ENCODE measurements at regions of chr7 and their contacts with region 1.

Region 1: GRCh38 chr7:129952653-129953560 is at the start of gene UBE2H:
- DNase-seq: peak; percentile 70
- ATAC-seq: peak; percentile 56
- H3K4me3 ChIP-seq: peak within 1 kb of the TSS; percentile 86 to 94 (median 87)
- H3K27ac ChIP-seq: peak within 1 kb of the TSS; percentile 92
- H3K4me1 ChIP-seq: peaks cover 25% of the 10 kb centered on the region
- H3K27me3 ChIP-seq: no peaks in the 10 kb centered on the region; a peak in 1 of 5 replicates
- CTCF ChIP-seq: no peak
- EP300 ChIP-seq: 0 out of 4 replicates have a peak, but pooled peaks of 1 of the 2 experiments have one; percentile 45
- POLR2A ChIP-seq: peak; percentile 74 to 75
- RAD21 ChIP-seq: 0 out of 2 replicates have a peak, but pooled peaks have one; percentile 39
- total RNA-seq, gene UBE2H: 15.5 and 18.7 TPM in 2 replicates

Region 2: GRCh38 chr7:129707910-129708499 is 244.9 kb before region 1 on chr7:
- CTCF ChIA-PET with region 1: no interaction called
- POLR2A ChIA-PET with region 1: no interaction called
- in situ Hi-C with region 1: no loop called
- intact Hi-C with region 1: no loop called
- DNase-seq: no peak
- ATAC-seq: no peak
- H3K4me3 ChIP-seq: no peak overlapping the region
- H3K27ac ChIP-seq: no peak overlapping the region
- H3K4me1 ChIP-seq: peaks cover 2% of the 10 kb centered on the region
- H3K27me3 ChIP-seq: no peaks in the 10 kb centered on the region
- CTCF ChIP-seq: no peak
- EP300 ChIP-seq: no peak
- POLR2A ChIP-seq: no peak
- RAD21 ChIP-seq: no peak

Region 3: GRCh38 chr7:129990403-129991192 is 37.7 kb after region 1 on chr7:
- CTCF ChIA-PET with region 1: no interaction called
- POLR2A ChIA-PET with region 1: no interaction called
- in situ Hi-C with region 1: no loop called
- intact Hi-C with region 1: loop called (anchors 5 kb)
- DNase-seq: peak; percentile 51
- ATAC-seq: peak; percentile 89
- H3K4me3 ChIP-seq: peak overlapping the region in 2 of 3 experiments; percentile 9 to 46; a peak in 3 of 6 replicates
- H3K27ac ChIP-seq: peak overlapping the region; percentile 55
- H3K4me1 ChIP-seq: peaks cover 25% of the 10 kb centered on the region
- H3K27me3 ChIP-seq: no peaks in the 10 kb centered on the region
- CTCF ChIP-seq: no peak
- EP300 ChIP-seq: peak in 1 of 2 experiments; percentile 75; a peak in 2 of 4 replicates
- POLR2A ChIP-seq: no peak
- RAD21 ChIP-seq: no peak

Region 4: DNA sequence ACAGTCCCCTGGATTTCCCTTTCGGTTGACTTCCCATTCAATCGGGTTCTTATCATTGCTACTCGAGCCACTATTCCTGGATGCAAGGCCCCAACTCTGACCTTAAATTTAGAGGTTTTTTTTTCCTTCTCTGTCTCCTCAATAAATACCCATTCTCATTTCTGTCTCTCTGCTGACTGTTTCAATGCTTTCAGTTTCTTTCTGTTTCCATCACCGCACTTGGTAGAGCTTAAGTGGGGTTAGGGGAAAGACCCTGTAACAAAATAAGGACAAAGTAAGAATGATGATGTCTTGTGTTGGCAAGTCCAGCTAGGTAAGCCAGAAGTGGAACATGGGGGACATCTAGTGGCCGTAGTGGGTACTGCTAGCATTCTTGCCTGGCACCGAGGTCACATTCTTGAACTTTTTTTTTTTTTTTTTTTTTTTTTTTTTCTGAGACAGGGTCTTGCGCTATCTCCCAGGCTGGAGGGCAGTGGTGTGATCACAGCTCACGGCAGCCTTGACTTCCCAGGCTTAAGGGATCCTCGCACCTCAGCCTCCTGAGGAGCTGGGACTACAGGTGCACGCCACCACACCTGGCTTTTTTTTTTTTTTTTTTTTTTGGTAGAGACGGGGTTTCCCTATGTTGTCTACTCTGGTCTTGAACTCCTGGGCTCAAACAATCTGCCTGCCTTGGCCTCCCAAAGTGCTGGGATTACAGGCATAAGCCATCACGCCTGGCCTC is 57.9 kb after region 1 on chr7:
- CTCF ChIA-PET with region 1: no interaction called
- POLR2A ChIA-PET with region 1: interaction called, 14 read pairs
- in situ Hi-C with region 1: no loop called
- intact Hi-C with region 1: loop called (anchors 2 kb)
- DNase-seq: peak; percentile 78
- ATAC-seq: peak; percentile 48
- H3K4me3 ChIP-seq: peak overlapping the region in 2 of 3 experiments; percentile 29 to 51; a peak in 3 of 6 replicates
- H3K27ac ChIP-seq: no peak overlapping the region
- H3K4me1 ChIP-seq: peaks cover 40% of the 10 kb centered on the region
- H3K27me3 ChIP-seq: peaks cover 0 to 6% of the 10 kb centered on the region in 2 experiments; a peak in 1 of 5 replicates
- CTCF ChIP-seq: peak; percentile 87
- EP300 ChIP-seq: no peak
- POLR2A ChIP-seq: no peak
- RAD21 ChIP-seq: peak; percentile 77